AG04449 (cell line): ENCODE measurements at regions of chr17 and their contacts with region 1.

Region 1: GRCh38 chr17:65100316-65101140 is 36.6 kb upstream of the RGS9 start:
- DNase-seq: no peak
- H3K4me3 ChIP-seq: peak overlapping the region; percentile 54
- CTCF ChIP-seq: peak; percentile 91

Region 2: DNA sequence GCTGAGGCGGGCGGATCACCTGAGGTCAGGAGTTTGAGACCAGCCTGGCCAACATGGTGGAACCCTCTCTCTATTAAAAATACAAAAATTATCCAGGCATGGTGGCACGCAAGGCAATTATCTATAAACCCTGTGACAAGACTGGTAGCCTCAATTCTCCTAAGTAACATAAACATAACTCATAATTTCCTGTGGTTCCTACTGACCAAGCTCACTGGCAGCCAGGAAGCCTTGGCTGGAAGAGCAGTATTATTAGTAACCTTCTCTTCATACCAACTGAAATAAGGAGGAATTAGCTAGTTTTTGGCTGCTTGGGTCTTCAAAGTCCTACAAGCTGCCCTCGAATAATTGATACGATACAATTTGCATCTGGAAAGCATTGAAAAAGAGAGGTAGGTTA is 149.7 kb before region 1 on chr17:
- CTCF ChIA-PET with region 1: no interaction called
- POLR2A ChIA-PET with region 1: no interaction called
- DNase-seq: no peak
- H3K4me3 ChIP-seq: no peak overlapping the region
- CTCF ChIP-seq: no peak

Region 3: DNA sequence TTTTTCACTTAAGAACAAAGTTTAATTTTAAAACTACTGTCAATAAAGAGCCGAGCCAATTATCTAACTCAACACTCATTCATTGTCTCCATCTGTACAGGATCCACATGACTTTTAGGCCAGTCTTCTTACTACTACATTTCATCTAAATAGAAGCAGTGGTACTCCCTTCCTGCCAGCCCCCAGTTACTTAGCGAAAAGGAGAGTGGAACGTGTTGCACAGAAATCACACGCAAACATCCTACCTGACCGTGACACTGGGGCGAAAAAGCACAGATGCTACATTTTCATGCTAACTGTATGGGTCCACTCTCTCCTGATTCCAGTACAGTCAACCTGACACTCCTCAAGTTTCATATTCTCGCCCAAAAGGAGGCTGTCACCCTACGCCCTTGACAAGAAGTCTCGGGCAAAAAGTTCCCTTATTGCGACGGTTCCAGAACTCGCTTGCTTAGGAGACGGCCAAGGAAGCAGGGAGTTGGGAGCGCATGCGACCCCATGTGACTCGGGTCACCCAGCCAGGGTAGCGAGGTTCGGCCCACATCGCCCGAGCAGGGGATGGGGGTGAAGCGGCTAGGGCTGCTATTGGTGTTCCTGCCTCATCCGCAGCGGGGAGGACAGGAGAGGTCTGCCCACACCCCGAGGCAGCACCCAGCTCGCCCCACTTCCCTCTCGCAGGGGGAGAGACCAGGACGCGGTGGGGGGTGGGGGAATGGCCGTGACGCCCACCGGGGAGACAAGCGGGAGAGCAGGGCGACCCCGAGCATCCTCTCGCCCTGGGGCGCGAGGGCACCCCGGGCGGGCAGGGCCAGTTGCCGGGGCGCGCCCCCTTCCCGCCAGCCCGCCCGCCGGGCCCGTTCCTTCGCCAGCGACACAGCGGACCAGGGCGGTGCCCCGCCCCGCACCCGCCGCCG is 44.9 kb before region 1 on chr17:
- CTCF ChIA-PET with region 1: interaction called, 17 read pairs
- POLR2A ChIA-PET with region 1: interaction called, 5 read pairs
- DNase-seq: no peak
- H3K4me3 ChIP-seq: peak overlapping the region; percentile 85
- CTCF ChIP-seq: no peak

Region 4: GRCh38 chr17:65074778-65075250 is 25.7 kb before region 1 on chr17:
- CTCF ChIA-PET with region 1: interaction called, 45 read pairs
- POLR2A ChIA-PET with region 1: no interaction called
- DNase-seq: no peak
- H3K4me3 ChIP-seq: no peak overlapping the region
- CTCF ChIP-seq: no peak

Region 5: GRCh38 chr17:65115839-65116238 is 15.3 kb after region 1 on chr17:
- CTCF ChIA-PET with region 1: interaction called, 25 read pairs
- POLR2A ChIA-PET with region 1: no interaction called
- DNase-seq: no peak
- H3K4me3 ChIP-seq: no peak overlapping the region
- CTCF ChIP-seq: no peak

Region 6: GRCh38 chr17:65268832-65269231 is 168.3 kb after region 1 on chr17:
- CTCF ChIA-PET with region 1: no interaction called
- POLR2A ChIA-PET with region 1: no interaction called
- DNase-seq: peak; percentile 46
- H3K4me3 ChIP-seq: no peak overlapping the region
- CTCF ChIP-seq: no peak

Region 7: DNA sequence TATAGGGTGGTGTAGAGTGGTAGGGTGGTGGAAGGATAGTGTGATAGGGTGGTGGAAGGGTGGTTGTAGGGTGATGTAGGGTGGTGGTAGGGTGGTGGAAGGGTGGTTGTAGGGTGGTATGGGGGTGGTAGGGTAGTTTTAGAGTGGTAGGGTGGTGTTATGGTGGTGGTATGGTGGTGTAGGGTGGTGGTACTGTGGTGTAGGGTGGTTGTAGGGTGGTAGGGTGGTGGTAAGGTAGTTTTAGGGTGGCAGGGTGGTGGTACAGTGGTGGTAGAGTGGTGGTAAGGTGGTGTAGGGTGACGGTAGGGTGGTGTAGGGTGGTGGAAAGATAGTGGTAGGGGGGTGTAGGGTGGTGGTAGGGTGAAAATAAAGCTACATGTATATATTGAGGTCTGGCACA is 399.5 kb after region 1 on chr17:
- CTCF ChIA-PET with region 1: no interaction called
- POLR2A ChIA-PET with region 1: no interaction called
- DNase-seq: no peak
- H3K4me3 ChIP-seq: no peak overlapping the region
- CTCF ChIP-seq: no peak